Astrocyte of the cerebellum (primary cell): ENCODE measurements at regions of chr7 and their contacts with region 1.

Region 1: DNA sequence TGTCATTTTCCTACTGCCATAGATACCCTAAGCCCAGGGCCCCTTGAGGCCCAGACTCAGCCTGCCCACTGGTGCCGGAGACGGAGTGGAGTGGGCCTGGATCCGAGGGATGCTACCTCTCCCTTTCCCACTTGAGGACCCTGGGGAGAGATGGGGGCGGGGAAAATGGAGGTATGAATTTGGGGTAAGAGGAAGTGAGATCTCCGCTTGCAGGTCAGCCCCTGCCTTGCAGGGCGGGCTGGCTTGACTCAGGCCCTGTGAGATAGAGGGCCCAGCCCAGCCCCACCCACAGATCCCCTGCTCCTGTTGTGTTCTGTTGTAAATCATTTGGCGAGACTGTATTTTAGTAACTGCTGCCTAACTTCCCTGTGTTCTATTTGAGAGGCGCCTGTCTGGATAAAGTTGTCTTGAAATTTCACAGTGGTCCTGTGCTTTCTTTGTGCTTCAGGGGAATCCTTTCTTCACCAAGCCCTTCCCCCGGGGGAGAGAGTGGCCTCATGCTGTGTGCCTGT is 13.2 kb downstream of the YKT6 start:
- DNase-seq: no peak
- H3K4me3 ChIP-seq: no peak overlapping the region
- CTCF ChIP-seq: no peak

Region 2: GRCh38 chr7:44078521-44078920 is 135.4 kb before region 1 on chr7:
- in situ Hi-C with region 1: loop called (anchors 5 kb)
- DNase-seq: no peak
- H3K4me3 ChIP-seq: no peak overlapping the region
- CTCF ChIP-seq: no peak

Region 3: DNA sequence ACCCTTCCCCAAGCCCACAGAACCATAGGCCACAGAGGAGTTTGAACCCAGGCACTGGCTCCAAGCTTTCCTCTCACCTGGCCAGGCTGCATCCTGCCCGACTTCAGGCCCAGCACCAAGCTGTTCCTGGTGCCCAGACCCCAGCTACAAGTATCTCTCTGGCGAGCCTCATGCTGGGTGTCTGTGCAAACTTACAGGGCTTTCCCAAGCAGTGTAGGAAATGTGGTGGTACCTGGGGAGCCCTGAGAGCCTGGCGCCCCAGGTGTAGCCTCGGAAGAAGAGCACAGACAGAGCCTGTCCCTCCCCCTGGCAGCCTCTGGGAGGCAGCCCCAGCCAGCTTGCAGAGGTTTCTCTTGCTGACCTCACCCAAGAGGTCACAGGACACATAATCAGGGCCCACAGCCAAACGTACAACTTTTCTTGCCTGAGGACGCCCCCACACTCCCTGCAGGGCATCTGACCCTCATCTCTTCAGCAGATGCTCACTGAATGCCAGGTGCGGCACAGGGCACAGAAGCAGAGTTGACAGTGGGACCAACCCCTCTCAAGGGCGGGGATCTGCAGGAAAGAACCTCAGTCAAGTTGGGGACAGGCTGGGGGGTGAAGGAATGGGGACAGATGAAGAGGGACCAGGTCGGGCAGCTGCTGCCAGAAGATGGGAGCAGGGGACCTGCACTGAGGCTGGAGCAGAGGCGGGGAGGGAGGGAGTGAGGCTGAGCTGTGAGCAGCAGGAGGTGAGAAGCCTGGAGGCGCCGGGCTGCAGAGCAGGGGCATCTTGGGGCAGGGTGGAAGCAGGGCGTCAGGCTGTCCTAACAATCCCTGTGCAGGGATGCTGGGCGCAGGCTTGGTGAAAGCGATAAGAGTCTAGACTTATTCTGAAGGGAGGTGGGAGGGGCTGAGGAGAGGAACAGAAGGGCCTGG is 56.5 kb before region 1 on chr7:
- in situ Hi-C with region 1: loop called (anchors 5 kb)
- DNase-seq: no peak
- H3K4me3 ChIP-seq: no peak overlapping the region
- CTCF ChIP-seq: no peak

Region 4: GRCh38 chr7:44267719-44268421 is 53.9 kb after region 1 on chr7:
- in situ Hi-C with region 1: loop called (anchors 5 kb)
- DNase-seq: no peak
- H3K4me3 ChIP-seq: no peak overlapping the region
- CTCF ChIP-seq: no peak

Region 5: GRCh38 chr7:44398511-44398911 is 184.6 kb after region 1 on chr7:
- in situ Hi-C with region 1: no loop called
- DNase-seq: no peak
- H3K4me3 ChIP-seq: no peak overlapping the region
- CTCF ChIP-seq: no peak